ENCODE measurements at regions of chr19 and their contacts with region 1.

Region 1: GRCh38 chr19:44587963-44588770 is 25.2 kb upstream of the IGSF23 start:
- H3K4me3 Mint-ChIP-seq: no peak overlapping the region
- H3K27ac Mint-ChIP-seq: peak overlapping the region; percentile 85
- H3K4me1 Mint-ChIP-seq: peaks cover 66% of the 10 kb centered on the region
- H3K27me3 Mint-ChIP-seq: peaks cover 14% of the 10 kb centered on the region

Region 2: DNA sequence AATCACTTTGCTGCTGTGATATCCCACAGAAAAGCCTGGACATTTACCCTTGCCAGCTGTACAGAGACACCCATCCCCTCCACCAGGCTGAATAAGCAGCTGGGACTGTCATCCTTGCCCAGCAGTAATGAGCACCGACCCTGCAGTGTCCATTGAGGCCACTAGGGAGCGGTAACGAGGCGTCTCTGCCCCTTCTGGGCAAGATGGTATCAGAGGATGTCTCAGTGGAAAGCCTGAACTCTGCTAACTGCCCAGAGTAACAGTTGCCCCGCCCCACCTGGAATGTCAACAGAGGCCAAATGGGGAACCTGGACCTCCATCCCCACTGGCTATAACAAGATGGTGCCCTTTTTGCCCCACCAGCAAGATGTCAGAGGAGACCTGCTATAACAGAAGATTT is 35.8 kb before region 1 on chr19:
- intact Hi-C with region 1: no loop called
- H3K4me3 Mint-ChIP-seq: no peak overlapping the region
- H3K27ac Mint-ChIP-seq: no peak overlapping the region
- H3K4me1 Mint-ChIP-seq: no peaks in the 10 kb centered on the region
- H3K27me3 Mint-ChIP-seq: peaks cover 18% of the 10 kb centered on the region

Region 3: DNA sequence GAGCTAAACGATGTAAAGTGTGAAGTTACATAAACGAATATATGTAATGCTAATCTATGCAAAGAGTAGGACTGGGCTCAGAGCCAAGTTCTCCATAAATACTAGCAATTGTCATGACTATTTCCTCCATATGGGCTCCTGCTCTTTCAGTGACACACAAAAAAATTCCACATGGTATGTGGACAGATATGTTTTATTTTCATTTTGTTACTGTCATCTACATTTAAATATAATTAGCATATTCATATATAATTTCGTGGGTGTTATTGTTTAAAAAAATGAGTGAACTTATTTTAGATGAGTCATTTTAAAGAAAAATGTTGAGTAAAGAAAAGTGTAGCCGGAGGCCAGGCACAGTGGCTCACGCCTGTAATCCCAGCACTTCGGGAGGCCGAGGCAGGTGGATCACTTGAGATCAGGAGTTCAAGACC is 20.2 kb after region 1 on chr19:
- intact Hi-C with region 1: no loop called
- H3K4me3 Mint-ChIP-seq: no peak overlapping the region
- H3K27ac Mint-ChIP-seq: peak overlapping the region; percentile 70
- H3K4me1 Mint-ChIP-seq: peaks cover 25% of the 10 kb centered on the region
- H3K27me3 Mint-ChIP-seq: peaks cover 2% of the 10 kb centered on the region

Region 4: DNA sequence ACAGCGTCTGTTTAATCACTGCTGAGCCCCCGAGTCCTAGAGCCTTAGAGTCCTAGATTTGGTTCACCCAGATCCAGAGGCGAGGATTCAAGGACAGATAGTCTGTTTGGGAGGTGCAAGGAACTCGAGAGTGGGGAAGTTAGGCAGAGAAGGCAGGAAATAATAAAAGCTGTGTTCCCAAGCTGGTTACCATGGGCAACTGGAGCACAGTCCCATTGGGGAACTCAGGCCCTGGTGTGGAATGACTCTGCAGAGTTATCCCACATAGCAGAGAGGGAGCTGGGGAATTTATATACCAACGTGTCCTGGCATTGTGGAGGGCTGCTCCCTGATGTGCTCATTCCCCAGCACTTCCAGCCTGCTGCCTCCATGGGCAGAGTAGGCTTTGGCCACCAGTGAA is 34.9 kb after region 1 on chr19:
- intact Hi-C with region 1: loop called (anchors 5 kb)
- H3K4me3 Mint-ChIP-seq: no peak overlapping the region
- H3K27ac Mint-ChIP-seq: peak overlapping the region; percentile 80
- H3K4me1 Mint-ChIP-seq: peaks cover 45% of the 10 kb centered on the region
- H3K27me3 Mint-ChIP-seq: peaks cover 12% of the 10 kb centered on the region

Region 5: GRCh38 chr19:44684892-44685863 is 97.0 kb after region 1 on chr19:
- intact Hi-C with region 1: no loop called
- H3K4me3 Mint-ChIP-seq: peak overlapping the region; percentile 18
- H3K27ac Mint-ChIP-seq: peak overlapping the region; percentile 81
- H3K4me1 Mint-ChIP-seq: peaks cover 68% of the 10 kb centered on the region
- H3K27me3 Mint-ChIP-seq: no peaks in the 10 kb centered on the region

Measured in dendritic cell treated with granulocyte-macrophage colony-stimulating factor and Interleukin-4, amounts not matched to agents 40 ng/mL and 50 ng/mL, for 4 days (primary cell).